Left ventricle myocardium inferior (tissue), 1 donor: ENCODE measurements at regions of chr6 and their contacts with region 1.

Region 1: GRCh38 chr6:167907837-167908681 is 81.3 kb downstream of the AFDN start:
- DNase-seq: no peak
- H3K4me3 ChIP-seq: peak overlapping the region; percentile 16
- H3K27ac ChIP-seq: peak overlapping the region; percentile 50
- H3K4me1 ChIP-seq: peaks cover 22% of the 10 kb centered on the region
- H3K27me3 ChIP-seq: no peaks in the 10 kb centered on the region
- CTCF ChIP-seq: peak; percentile 74

Region 2: GRCh38 chr6:168132531-168133167 is 224.6 kb after region 1 on chr6:
- intact Hi-C with region 1: loop called (anchors 5 kb)
- DNase-seq: peak; percentile 69
- H3K4me3 ChIP-seq: peak overlapping the region; percentile 58
- H3K27ac ChIP-seq: peak overlapping the region; percentile 58
- H3K4me1 ChIP-seq: peaks cover 30% of the 10 kb centered on the region
- H3K27me3 ChIP-seq: peaks cover 9% of the 10 kb centered on the region
- CTCF ChIP-seq: peak; percentile 80

Region 3: GRCh38 chr6:168163096-168163731 is 255.2 kb after region 1 on chr6:
- intact Hi-C with region 1: no loop called
- DNase-seq: no peak
- H3K4me3 ChIP-seq: no peak overlapping the region
- H3K27ac ChIP-seq: no peak overlapping the region
- H3K4me1 ChIP-seq: no peaks in the 10 kb centered on the region
- H3K27me3 ChIP-seq: peaks cover 66% of the 10 kb centered on the region
- CTCF ChIP-seq: no peak